Lower leg skin (tissue), 4 donors: ENCODE measurements at regions of chr1 and their contacts with region 1.

Region 1: DNA sequence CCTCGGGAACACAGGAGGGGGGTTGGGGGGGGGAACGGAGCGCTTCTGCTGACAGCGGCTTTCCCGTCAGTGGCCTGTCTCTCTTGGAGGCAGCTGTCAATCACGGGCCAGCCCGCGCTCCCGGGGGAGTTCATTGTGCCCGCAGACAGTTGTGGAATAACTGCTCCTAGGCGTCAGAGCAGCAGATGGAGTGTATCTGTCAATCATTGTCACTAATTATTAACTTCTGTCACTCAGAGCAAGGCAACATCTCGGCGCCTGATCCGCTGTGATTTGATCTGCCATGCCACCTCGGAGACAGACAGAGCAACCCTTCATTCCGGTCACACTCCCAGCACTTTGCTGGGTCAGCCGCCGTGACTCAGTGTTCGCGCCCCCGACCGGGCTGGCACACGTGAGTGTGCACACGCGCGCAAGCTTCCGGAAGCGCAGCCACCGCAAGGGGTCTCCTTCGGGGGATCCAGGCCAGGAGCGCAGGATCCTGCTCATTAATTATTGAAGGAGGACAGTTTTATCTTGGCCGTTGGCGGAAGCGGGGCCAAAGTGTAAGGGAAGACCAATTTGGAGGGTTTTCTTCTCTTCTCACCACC is 75.8 kb downstream of the RRAGC start:
- DNase-seq: peak in 1 of 2 donors; percentile 70
- H3K4me3 ChIP-seq: no peak overlapping the region
- CTCF ChIP-seq: no peak
- POLR2A ChIP-seq: no peak

Region 2: DNA sequence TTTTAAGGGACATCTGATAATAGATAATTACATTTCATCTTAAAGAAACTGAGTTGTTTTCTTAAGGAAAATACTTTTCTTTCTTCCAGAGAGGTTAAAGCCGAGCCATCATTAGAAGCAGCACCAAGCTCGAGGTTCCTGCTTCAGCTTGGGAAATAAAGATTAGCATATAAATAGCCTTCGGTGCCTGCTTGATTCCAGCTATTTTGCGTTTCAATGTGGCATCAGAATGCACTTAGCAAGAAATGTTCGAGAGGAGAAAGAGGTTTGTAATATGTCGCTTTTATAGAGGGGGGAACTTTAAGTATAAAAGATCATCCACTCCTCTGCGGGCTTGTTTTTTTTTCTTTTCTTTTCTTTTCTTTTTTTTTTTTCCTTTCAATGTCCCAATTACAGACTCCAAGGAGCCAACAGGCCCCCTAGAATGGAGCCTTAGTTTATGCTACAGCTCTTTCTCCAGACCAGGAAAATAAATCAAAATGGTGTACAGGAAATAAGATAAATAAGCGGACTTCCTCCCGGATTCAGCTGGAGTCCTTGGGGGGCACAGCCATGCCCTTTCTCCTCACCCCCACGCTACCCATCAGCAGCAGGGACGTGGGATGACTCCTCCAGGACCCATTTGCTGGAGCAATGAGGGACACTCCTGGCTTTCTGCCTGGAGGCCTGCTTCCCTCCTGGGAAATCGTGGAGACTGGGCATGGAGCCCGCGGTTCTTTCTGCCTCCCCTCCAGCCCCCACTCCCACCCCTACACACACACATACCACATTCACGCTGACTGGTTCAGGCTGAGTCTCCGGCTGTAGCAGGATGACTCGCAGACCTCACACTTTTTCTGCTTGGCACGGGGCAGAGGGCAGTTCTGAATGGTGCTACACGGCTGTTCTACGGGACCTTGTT is 55.8 kb before region 1 on chr1:
- intact Hi-C with region 1: loop called (anchors 2 kb)
- DNase-seq: no peak
- H3K4me3 ChIP-seq: no peak overlapping the region
- CTCF ChIP-seq: no peak
- POLR2A ChIP-seq: no peak